Lower leg skin (tissue), 4 donors: ENCODE measurements at regions of chr10 and their contacts with region 1.

Region 1: DNA sequence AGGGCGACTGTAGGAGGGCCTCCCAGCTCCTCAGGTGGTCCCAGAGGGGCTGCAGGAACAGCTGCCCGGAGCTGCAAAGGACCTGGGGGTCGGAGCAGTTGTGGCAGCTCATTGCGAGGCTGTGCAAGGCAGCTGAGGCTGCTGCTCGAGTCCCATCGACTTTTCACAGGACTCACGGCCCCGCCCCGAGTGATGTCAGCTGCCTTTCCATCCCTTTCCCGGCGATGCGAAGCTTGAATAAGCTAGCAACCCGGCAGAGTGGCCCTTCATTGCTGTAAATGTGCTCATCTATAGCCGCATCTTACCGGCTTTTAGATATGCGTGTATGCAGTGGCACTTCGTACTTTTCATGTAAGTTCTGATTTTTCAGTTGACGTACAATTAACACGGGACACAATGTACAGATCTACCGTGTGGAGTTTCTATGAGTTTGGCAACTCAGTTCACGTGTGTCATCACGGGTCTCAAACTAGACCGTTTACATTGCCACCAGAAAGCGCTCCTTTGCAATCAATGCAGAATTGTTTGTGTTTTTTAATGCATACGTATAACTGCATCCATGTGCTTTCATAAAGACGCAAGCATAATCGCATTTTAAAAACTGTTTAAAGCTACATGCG is at the start of gene CH25H:
- DNase-seq: peak; percentile 81 to 97
- H3K4me3 ChIP-seq: peak within 1 kb of the TSS; percentile 10
- CTCF ChIP-seq: no peak
- POLR2A ChIP-seq: no peak
- total RNA-seq, gene CH25H: 0.45 to 2.8 (median 0.97) TPM

Region 2: GRCh38 chr10:89029785-89030437 is 177.4 kb before region 1 on chr10:
- intact Hi-C with region 1: loop called (anchors 5 kb)
- DNase-seq: peak; percentile 78 to 95
- H3K4me3 ChIP-seq: no peak overlapping the region
- CTCF ChIP-seq: peak in 1 of 3 donors; percentile 64
- POLR2A ChIP-seq: no peak

Region 3: GRCh38 chr10:89151857-89152256 is 55.4 kb before region 1 on chr10:
- intact Hi-C with region 1: no loop called
- DNase-seq: no peak
- H3K4me3 ChIP-seq: no peak overlapping the region
- CTCF ChIP-seq: no peak
- POLR2A ChIP-seq: no peak